CD8-positive, alpha-beta T cell (primary cell): ENCODE measurements at regions of chr16 and their contacts with region 1.

Region 1: GRCh38 chr16:58129097-58129936 is at the start of gene CFAP20:
- DNase-seq: peak; percentile 92 to 98 (median 96)
- ATAC-seq: peak; percentile 90
- H3K4me3 ChIP-seq: peak within 1 kb of the TSS; percentile 75 to 95
- H3K4me3 Mint-ChIP-seq: peak within 1 kb of the TSS; percentile 99
- H3K27ac ChIP-seq: peak within 1 kb of the TSS; percentile 82 to 91
- H3K27ac Mint-ChIP-seq: peak within 1 kb of the TSS; percentile 98
- H3K4me1 ChIP-seq: peaks cover 30% of the 10 kb centered on the region
- H3K4me1 Mint-ChIP-seq: peaks cover 44% of the 10 kb centered on the region
- H3K27me3 ChIP-seq: no peaks in the 10 kb centered on the region
- H3K27me3 Mint-ChIP-seq: no peaks in the 10 kb centered on the region
- CTCF ChIP-seq: no peak
- total RNA-seq, gene CFAP20: 102 to 104 TPM

Region 2: DNA sequence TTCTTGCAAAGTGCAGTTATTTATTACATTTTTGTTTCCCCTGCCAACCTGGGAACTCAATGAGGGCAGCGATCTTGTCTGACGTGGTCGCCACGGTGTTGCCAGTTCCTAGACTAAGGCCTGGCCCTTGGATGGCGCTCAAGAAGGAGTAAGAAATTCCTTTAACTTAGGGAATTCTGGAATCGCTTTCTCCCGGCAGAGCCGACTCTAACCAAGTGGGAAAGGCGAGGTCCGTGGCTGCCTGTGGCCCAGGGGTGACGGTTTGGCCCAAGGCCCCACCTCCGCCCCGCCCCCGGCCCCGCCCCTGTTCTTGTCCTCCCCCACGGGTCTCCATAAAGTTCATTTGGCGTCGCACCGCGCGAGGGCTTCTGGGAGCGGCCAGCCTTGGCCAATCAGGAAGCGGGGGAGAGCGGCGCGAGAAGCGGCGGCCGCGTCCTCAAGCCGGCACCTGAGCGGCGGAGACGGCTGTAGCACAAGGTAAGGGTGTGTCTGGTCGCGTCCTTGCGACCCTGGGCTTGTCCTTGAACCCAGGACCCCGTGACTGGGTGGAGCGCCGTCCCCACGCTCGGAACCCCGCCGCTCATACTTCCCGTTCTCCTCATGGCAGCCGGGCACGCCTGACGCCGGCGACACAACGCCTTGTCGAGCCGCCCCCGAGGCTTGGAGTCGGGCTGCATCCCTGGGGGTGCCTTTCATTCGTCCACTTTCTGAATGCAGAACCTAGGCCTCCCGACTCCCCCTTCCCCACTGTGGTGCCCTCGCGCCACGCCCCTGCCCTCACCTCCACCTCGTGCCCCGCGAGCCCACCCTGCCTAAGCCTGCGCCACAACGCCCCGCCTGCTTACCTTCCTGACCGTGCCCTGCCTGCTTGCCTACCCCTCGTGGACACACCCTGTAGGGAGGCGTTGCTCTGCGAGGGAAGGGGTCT is 1399.3 kb before region 1 on chr16 and contains the start of gene NUP93:
- CTCF ChIA-PET with region 1: no interaction called
- POLR2A ChIA-PET with region 1: no interaction called
- intact Hi-C with region 1: loop called in 1 of 2 experiments (anchors 5 kb)
- DNase-seq: peak; percentile 76 to 94 (median 90)
- ATAC-seq: peak; percentile 94
- H3K4me3 ChIP-seq: peak within 1 kb of the TSS; percentile 79 to 87
- H3K4me3 Mint-ChIP-seq: no peak within 1 kb of the TSS
- H3K27ac ChIP-seq: peak within 1 kb of the TSS; percentile 58 to 81
- H3K27ac Mint-ChIP-seq: peak within 1 kb of the TSS; percentile 90
- H3K4me1 ChIP-seq: peaks cover 34% of the 10 kb centered on the region
- H3K4me1 Mint-ChIP-seq: peaks cover 23% of the 10 kb centered on the region
- H3K27me3 ChIP-seq: no peaks in the 10 kb centered on the region
- H3K27me3 Mint-ChIP-seq: no peaks in the 10 kb centered on the region
- CTCF ChIP-seq: no peak
- total RNA-seq, gene NUP93: 68.2 to 68.5 TPM

Region 3: DNA sequence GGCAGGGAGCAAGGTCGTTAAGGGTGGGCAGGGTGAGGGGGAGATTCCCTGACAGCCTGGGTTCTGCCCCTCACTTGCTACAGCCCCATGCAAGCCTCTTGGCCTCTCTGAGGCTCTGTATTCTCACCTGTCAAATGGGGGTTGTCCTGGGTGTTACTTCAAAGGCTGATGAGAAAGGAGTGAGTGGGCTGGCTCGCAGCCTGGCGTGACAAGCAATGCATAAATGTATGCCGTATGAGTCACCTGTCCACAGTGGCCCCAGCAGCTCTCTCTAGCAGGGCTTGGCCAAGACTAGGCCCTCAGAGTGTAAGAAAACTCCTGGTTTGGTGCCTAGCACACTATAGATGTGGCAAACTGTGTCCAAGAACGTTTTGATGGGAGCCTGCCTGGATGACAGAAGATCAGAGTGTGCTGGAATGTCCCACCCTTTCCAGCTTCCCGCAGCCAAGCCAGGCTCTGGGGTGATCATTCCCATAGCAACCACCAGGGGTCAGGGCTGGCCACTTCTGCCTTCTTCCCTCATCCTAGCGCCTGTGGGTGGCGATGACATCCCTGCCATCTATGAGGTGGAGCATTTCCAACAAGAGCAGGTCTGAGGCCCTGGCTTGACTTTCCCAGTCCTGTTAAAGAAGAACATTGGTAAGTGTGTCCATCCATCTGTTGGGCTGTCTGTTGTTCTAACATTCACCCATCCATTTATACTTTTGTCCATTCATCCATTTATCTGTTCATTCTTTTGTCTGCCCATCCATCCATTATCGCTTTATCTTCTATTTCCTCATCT is 538.0 kb before region 1 on chr16:
- CTCF ChIA-PET with region 1: no interaction called
- POLR2A ChIA-PET with region 1: no interaction called
- intact Hi-C with region 1: loop called in 1 of 2 experiments (anchors 2 kb)
- DNase-seq: peak in 7 of 9 experiments; percentile 37 to 82 (median 61)
- ATAC-seq: peak; percentile 27
- H3K4me3 ChIP-seq: no peak overlapping the region
- H3K4me3 Mint-ChIP-seq: peak overlapping the region; percentile 66
- H3K27ac ChIP-seq: peak overlapping the region in 1 of 2 experiments; percentile 62
- H3K27ac Mint-ChIP-seq: peak overlapping the region; percentile 84
- H3K4me1 ChIP-seq: peaks cover 34% of the 10 kb centered on the region
- H3K4me1 Mint-ChIP-seq: peaks cover 47% of the 10 kb centered on the region
- H3K27me3 ChIP-seq: no peaks in the 10 kb centered on the region
- H3K27me3 Mint-ChIP-seq: no peaks in the 10 kb centered on the region
- CTCF ChIP-seq: peak; percentile 60

Region 4: GRCh38 chr16:57984331-57985203 is 144.8 kb before region 1 on chr16:
- CTCF ChIA-PET with region 1: no interaction called
- POLR2A ChIA-PET with region 1: no interaction called
- intact Hi-C with region 1: loop called in 1 of 2 experiments (anchors 1 kb)
- DNase-seq: peak; percentile 81 to 96 (median 90)
- ATAC-seq: peak; percentile 96
- H3K4me3 ChIP-seq: peak overlapping the region; percentile 64 to 83
- H3K4me3 Mint-ChIP-seq: peak overlapping the region; percentile 88
- H3K27ac ChIP-seq: peak overlapping the region in 1 of 2 experiments; percentile 36
- H3K27ac Mint-ChIP-seq: peak overlapping the region; percentile 37
- H3K4me1 ChIP-seq: peaks cover 12% of the 10 kb centered on the region
- H3K4me1 Mint-ChIP-seq: peaks cover 16% of the 10 kb centered on the region
- H3K27me3 ChIP-seq: no peaks in the 10 kb centered on the region
- H3K27me3 Mint-ChIP-seq: no peaks in the 10 kb centered on the region
- CTCF ChIP-seq: no peak

Region 5: GRCh38 chr16:58198022-58198683 is 68.8 kb after region 1 on chr16 and contains the start of gene CSNK2A2:
- CTCF ChIA-PET with region 1: interaction called, 6 read pairs
- POLR2A ChIA-PET with region 1: interaction called, 3 read pairs
- intact Hi-C with region 1: loop called (anchors 1 kb)
- DNase-seq: peak; percentile 42 to 87 (median 69)
- ATAC-seq: peak; percentile 94
- H3K4me3 ChIP-seq: peak within 1 kb of the TSS; percentile 56 to 67
- H3K4me3 Mint-ChIP-seq: peak within 1 kb of the TSS; percentile 89
- H3K27ac ChIP-seq: no peak within 1 kb of the TSS
- H3K27ac Mint-ChIP-seq: peak within 1 kb of the TSS; percentile 88
- H3K4me1 ChIP-seq: peaks cover 26% of the 10 kb centered on the region
- H3K4me1 Mint-ChIP-seq: peaks cover 39% of the 10 kb centered on the region
- H3K27me3 ChIP-seq: no peaks in the 10 kb centered on the region
- H3K27me3 Mint-ChIP-seq: peaks cover 7% of the 10 kb centered on the region
- CTCF ChIP-seq: no peak
- total RNA-seq, gene CSNK2A2: 53.3 to 58.4 TPM

Region 6: DNA sequence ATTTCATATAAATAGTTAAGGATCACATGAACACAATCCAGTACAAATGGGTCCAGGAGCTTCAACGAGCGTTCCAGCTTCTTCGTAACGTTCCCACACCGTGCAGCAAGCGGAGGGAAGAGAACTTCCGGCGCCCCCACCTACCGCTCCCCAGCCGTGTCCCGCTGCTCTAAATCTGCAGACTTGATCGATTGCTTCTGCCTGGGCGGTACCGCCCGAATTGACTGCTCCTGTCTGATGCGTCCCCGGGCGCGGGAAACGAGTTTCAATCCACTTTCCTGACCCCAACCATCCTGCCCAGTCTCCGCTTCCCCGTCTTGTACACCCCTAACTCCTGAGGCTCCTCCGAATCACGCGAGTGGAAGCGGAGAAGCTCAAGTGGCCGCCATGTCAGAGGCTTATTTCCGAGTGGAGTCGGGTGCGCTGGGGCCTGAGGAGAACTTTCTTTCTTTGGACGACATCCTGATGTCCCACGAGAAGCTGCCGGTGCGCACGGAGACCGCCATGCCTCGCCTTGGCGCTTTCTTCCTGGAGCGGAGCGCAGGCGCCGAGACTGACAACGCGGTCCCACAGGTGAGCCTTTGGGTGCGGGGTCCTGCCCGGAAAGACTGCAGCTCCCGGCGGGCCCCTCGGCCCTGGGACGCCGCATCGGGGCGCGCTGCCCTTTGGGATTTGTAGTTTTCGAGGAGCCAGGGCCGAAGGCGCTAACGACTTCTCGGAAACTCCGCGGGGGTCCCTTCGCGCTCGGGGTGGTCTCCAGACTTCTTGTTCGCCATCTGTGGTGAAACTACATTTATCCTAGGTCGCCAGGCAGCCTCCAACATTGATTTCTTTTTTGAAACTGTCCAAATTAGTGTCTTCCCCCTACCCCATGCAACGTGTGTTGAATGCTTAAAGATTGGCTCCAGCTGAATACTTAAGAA is 263.2 kb after region 1 on chr16 and contains the start of gene GINS3:
- CTCF ChIA-PET with region 1: no interaction called
- POLR2A ChIA-PET with region 1: no interaction called
- intact Hi-C with region 1: loop called in 1 of 2 experiments (anchors 2 kb)
- DNase-seq: peak; percentile 62 to 90 (median 83)
- ATAC-seq: peak; percentile 97
- H3K4me3 ChIP-seq: peak within 1 kb of the TSS; percentile 96 to 98
- H3K4me3 Mint-ChIP-seq: peak within 1 kb of the TSS; percentile 100
- H3K27ac ChIP-seq: peak within 1 kb of the TSS; percentile 69 to 79
- H3K27ac Mint-ChIP-seq: peak within 1 kb of the TSS; percentile 97
- H3K4me1 ChIP-seq: peaks cover 6% of the 10 kb centered on the region
- H3K4me1 Mint-ChIP-seq: peaks cover 16% of the 10 kb centered on the region
- H3K27me3 ChIP-seq: no peaks in the 10 kb centered on the region
- H3K27me3 Mint-ChIP-seq: no peaks in the 10 kb centered on the region
- CTCF ChIP-seq: no peak
- total RNA-seq, gene GINS3: 0.54 to 1.1 TPM